Thyroid gland (tissue), 4 donors: ENCODE measurements at regions of chr2 and their contacts with region 1.

Region 1: DNA sequence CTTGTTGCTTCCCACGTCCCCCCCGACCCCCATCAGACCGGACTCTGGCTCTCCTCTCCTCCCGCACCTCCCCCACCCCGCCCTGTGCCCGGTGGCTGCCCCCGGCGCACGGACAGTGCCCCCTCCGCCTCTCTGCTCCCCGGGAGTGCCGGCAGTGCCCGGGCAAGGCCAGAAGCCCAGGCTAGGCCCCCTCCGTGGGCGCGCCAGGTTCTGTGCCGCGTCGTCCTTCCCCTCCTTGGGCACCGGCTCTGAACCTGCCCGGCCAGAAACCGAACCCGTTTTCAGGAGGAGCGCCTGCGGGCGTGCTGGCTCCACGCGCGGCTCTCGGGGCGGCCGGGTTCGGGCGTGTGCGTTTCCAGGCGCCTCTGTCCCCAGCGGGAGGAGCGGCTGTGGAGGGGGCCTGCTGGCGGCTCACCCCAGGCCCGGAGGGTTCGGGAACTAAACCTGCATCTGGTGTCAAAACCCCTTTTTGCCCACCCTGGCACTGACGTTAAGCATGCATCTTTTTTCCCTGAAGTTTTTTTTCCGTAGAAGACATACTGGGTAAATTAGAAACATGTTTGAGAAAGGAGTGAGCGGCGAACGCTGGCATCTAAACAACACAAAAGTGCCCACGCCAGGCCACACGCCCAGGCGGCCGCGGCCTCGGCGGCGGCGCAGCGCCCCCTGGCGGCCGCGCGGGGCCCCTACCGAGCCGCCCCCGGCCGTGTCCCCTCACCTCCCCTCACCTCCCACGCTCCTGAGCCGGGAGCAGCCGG is 123.9 kb upstream of the SLC1A4 start:
- DNase-seq: peak; percentile 67 to 70
- H3K4me3 ChIP-seq: peak overlapping the region; percentile 16 to 75 (median 55)
- H3K27ac ChIP-seq: peak overlapping the region; percentile 67 to 79 (median 76)
- H3K4me1 ChIP-seq: peaks cover 0 to 8% of the 10 kb centered on the region in 2 donors
- H3K27me3 ChIP-seq: no peaks in the 10 kb centered on the region
- CTCF ChIP-seq: peak in 4 of 6 experiments; percentile 67 to 97 (median 94)
- POLR2A ChIP-seq: no peak

Region 2: DNA sequence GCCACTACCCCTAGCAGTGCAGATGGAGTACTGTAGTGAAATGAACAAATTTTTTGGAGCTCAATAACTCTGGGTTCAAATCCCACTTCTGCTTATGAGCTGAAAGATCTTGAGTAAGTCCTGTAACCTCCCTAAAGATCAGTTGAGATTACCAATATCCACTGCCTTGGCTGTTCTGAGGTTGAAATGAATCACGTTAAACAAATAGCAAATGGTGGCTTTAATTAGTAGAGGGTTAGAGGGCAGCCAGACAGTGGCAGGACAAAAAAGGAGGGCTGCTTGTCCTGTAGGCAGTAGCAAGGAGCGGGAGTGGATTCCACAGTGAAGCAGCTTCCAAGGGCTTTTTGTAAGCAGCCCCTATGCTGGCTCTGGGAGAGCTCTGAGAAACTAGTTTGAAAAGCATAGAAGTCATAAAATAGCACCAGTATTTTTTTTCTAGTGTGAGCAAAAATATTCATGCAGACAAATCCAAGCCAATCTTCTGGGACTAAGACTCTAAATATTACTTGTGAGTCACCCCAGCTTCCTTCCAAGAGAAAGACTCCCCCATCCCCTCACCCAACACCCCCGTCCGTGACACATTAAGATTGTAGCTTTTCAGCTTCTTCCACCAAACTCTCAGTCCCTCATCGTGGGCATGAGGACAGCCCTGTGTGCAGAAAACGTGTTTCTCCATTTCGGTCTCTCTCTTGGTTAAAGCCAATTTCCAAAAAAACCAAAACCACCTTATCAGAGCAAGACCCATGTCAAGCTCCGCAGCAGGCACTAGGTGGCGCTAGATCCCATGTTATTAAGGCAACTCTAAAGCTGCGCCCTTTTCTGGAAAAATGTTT is 534.8 kb before region 1 on chr2:
- intact Hi-C with region 1: loop called (anchors 10 kb)
- DNase-seq: peak; percentile 72 to 84
- H3K4me3 ChIP-seq: no peak overlapping the region
- H3K27ac ChIP-seq: peak overlapping the region in 2 of 3 donors; percentile 27 to 53
- H3K4me1 ChIP-seq: peaks cover 4 to 14% of the 10 kb centered on the region in 2 donors
- H3K27me3 ChIP-seq: no peaks in the 10 kb centered on the region
- CTCF ChIP-seq: peak; percentile 84 to 96 (median 88)
- POLR2A ChIP-seq: no peak

Region 3: GRCh38 chr2:64523666-64524603 is 341.3 kb before region 1 on chr2 and contains the start of gene AFTPH:
- intact Hi-C with region 1: loop called (anchors 5 kb)
- DNase-seq: peak; percentile 99
- H3K4me3 ChIP-seq: peak within 1 kb of the TSS; percentile 68 to 86 (median 78)
- H3K27ac ChIP-seq: peak within 1 kb of the TSS; percentile 81 to 94 (median 82)
- H3K4me1 ChIP-seq: peaks cover 0 to 7% of the 10 kb centered on the region in 2 donors
- H3K27me3 ChIP-seq: no peaks in the 10 kb centered on the region
- CTCF ChIP-seq: peak in 1 of 6 experiments; percentile 18
- POLR2A ChIP-seq: peak in 1 of 2 donors; percentile 90
- total RNA-seq, gene AFTPH: 51.7 to 56.7 (median 53.2) TPM

Region 4: DNA sequence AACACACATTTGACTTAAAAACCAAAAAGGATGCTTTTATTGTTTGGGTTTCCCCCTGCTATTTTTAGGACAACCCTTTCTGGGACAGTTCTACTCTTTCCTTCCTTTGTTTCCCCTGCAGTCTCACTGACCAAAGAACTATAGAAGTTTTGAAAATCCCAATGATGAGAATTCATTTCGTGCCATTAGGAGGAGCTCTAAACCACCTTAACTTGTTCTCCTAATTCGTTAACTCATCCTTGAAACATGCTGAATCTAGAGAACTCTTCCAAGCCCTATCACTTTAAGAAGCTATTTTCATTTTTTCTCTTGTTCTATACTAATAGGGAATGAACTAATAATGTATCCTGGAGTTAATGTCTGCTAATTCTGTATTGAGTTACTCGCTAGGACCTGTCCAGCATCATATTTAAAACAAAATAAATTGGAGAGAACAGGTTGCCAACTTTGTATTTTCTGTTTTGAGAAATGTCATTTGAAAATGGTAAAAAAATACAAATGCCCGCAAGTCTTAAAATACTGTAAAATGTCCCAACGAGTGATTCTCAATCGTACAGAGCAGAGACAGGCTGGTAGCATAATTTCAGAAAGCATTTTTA is 278.3 kb before region 1 on chr2:
- intact Hi-C with region 1: loop called (anchors 5 kb)
- DNase-seq: no peak
- H3K4me3 ChIP-seq: no peak overlapping the region
- H3K27ac ChIP-seq: no peak overlapping the region
- H3K4me1 ChIP-seq: no peaks in the 10 kb centered on the region
- H3K27me3 ChIP-seq: no peaks in the 10 kb centered on the region
- CTCF ChIP-seq: peak in 5 of 6 experiments; percentile 21 to 80 (median 64)
- POLR2A ChIP-seq: no peak

Region 5: DNA sequence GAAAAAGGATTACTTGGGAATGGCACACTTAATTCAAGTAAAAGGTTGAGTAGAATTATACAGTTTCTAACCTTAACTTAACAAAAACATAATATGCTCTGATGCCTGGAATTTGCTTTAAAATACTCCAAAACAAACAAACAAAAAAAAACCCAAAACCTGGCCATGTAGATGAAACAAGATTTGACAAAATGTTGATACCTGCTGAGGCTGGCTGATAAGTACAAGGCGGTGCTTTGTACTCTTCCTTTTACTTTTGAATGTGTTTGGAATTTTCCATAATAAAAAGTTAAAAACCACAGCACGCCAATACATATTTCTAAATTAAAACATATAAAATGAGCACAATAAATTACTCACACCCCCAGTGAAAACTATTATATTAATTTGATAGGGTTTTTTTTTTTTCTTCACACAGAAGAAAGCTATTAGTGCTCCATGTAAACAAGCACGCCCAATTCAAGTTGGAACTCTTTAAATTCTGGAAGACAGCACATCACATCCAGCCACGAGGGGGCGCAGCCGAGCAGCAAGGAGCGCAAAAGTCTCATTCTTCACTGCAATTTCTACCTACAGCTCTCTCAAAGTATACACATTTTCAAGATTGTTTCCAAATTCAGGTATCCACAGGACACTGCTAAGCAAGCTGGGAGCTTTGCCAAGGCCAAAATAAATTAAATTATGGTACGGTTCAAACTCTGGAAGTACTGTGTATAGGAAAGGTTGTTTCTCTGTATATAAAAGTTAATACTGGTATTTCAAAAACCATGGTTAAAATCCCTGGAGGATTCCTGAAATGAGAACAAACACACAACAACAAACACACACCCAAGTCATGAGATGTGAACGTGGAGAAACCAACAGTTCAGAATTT is 219.0 kb before region 1 on chr2:
- intact Hi-C with region 1: loop called (anchors 2 kb)
- DNase-seq: peak; percentile 88 to 92
- H3K4me3 ChIP-seq: no peak overlapping the region
- H3K27ac ChIP-seq: peak overlapping the region; percentile 90 to 99 (median 98)
- H3K4me1 ChIP-seq: peaks cover 53 to 84% of the 10 kb centered on the region in 2 donors
- H3K27me3 ChIP-seq: no peaks in the 10 kb centered on the region
- CTCF ChIP-seq: peak; percentile 81 to 90 (median 85)
- POLR2A ChIP-seq: no peak

Region 6: GRCh38 chr2:64807417-64807816 is 57.8 kb before region 1 on chr2:
- intact Hi-C with region 1: no loop called
- DNase-seq: no peak
- H3K4me3 ChIP-seq: no peak overlapping the region
- H3K27ac ChIP-seq: no peak overlapping the region
- H3K4me1 ChIP-seq: peaks cover 0 to 4% of the 10 kb centered on the region in 2 donors
- H3K27me3 ChIP-seq: no peaks in the 10 kb centered on the region
- CTCF ChIP-seq: no peak
- POLR2A ChIP-seq: no peak

Region 7: GRCh38 chr2:66171530-66171929 is 1306.3 kb after region 1 on chr2:
- intact Hi-C with region 1: no loop called
- DNase-seq: no peak
- H3K4me3 ChIP-seq: no peak overlapping the region
- H3K27ac ChIP-seq: no peak overlapping the region
- H3K4me1 ChIP-seq: peaks cover 0 to 6% of the 10 kb centered on the region in 2 donors
- H3K27me3 ChIP-seq: no peaks in the 10 kb centered on the region
- CTCF ChIP-seq: no peak
- POLR2A ChIP-seq: no peak